Left ventricle myocardium inferior (tissue), 1 donor: ENCODE measurements at regions of chr14 and their contacts with region 1.

Region 1: GRCh38 chr14:55221186-55221585 is 29.8 kb upstream of the DLGAP5 start:
- DNase-seq: no peak
- H3K4me3 ChIP-seq: no peak overlapping the region
- H3K27ac ChIP-seq: no peak overlapping the region
- H3K4me1 ChIP-seq: no peaks in the 10 kb centered on the region
- H3K27me3 ChIP-seq: no peaks in the 10 kb centered on the region
- CTCF ChIP-seq: no peak

Region 2: GRCh38 chr14:54638135-54638446 is 583.1 kb before region 1 on chr14:
- intact Hi-C with region 1: no loop called
- DNase-seq: no peak
- H3K4me3 ChIP-seq: no peak overlapping the region
- H3K27ac ChIP-seq: no peak overlapping the region
- H3K4me1 ChIP-seq: peaks cover 93% of the 10 kb centered on the region
- H3K27me3 ChIP-seq: no peaks in the 10 kb centered on the region
- CTCF ChIP-seq: no peak

Region 3: GRCh38 chr14:55026793-55027561 is 194.2 kb before region 1 on chr14 and contains the starts of genes SOCS4 and WDHD1:
- intact Hi-C with region 1: no loop called
- DNase-seq: peak; percentile 95
- H3K4me3 ChIP-seq: peak within 1 kb of the TSS; percentile 82
- H3K27ac ChIP-seq: peak within 1 kb of the TSS; percentile 90
- H3K4me1 ChIP-seq: peaks cover 59% of the 10 kb centered on the region
- H3K27me3 ChIP-seq: no peaks in the 10 kb centered on the region
- CTCF ChIP-seq: peak; percentile 33
- total RNA-seq, gene SOCS4: 18.1 TPM
- total RNA-seq, gene WDHD1: 1.3 TPM

Region 4: GRCh38 chr14:55274751-55275150 is 53.6 kb after region 1 on chr14:
- intact Hi-C with region 1: no loop called
- DNase-seq: no peak
- H3K4me3 ChIP-seq: peak overlapping the region; percentile 96
- H3K27ac ChIP-seq: peak overlapping the region; percentile 95
- H3K4me1 ChIP-seq: peaks cover 82% of the 10 kb centered on the region
- H3K27me3 ChIP-seq: no peaks in the 10 kb centered on the region
- CTCF ChIP-seq: no peak

Region 5: GRCh38 chr14:55285048-55285652 is 64.0 kb after region 1 on chr14:
- intact Hi-C with region 1: no loop called
- DNase-seq: no peak
- H3K4me3 ChIP-seq: no peak overlapping the region
- H3K27ac ChIP-seq: no peak overlapping the region
- H3K4me1 ChIP-seq: peaks cover 62% of the 10 kb centered on the region
- H3K27me3 ChIP-seq: no peaks in the 10 kb centered on the region
- CTCF ChIP-seq: no peak

Region 6: DNA sequence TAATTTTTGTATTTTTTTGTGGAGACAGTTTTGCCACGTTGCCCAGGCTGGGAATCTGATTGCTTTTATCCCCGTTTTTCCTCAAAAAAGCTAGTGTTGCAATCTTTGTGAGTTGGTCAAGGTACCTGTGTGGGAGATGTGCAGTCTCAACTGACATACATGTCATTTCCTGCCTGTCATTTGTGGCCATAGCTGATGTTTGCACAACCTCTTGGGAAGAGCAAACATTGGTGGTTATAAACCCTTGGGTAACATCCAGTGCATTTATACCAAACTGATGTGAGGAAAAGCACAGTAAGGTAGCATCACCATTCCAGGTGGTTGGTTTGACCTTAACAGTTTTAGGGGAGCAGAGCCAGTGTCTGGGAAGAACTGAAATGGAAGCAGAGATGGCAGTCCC is 135.7 kb after region 1 on chr14:
- intact Hi-C with region 1: loop called (anchors 5 kb)
- DNase-seq: no peak
- H3K4me3 ChIP-seq: no peak overlapping the region
- H3K27ac ChIP-seq: no peak overlapping the region
- H3K4me1 ChIP-seq: peaks cover 27% of the 10 kb centered on the region
- H3K27me3 ChIP-seq: no peaks in the 10 kb centered on the region
- CTCF ChIP-seq: no peak